ENCODE measurements at regions of chr7 and their contacts with region 1.

Region 1: DNA sequence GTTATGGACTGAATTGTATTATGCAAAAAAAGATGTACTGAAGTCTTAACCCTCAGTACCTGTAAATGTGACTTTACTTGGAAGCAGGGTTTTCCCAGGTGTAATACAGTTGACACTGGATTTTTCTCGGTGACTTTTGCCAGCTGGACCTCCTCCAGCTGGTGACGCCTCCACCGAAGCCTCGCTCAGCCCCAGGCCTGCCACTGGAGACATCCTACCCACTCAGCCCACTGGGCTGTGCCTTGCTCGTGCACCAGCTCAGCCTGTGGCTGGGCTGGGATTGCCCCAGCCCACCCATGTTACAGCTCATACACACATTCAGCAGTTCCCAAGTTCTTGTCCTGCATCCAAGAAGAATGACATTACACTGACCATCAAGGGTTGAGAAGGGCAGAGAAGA is 42.4 kb upstream of the GPR22 start:
- DNase-seq: peak in 3 of 5 donors; percentile 21 to 41 (median 31)
- ATAC-seq: peak in 3 of 4 donors; percentile 65 to 81 (median 65)
- H3K4me3 ChIP-seq: no peak overlapping the region
- H3K27ac ChIP-seq: no peak overlapping the region
- H3K4me1 ChIP-seq: peaks cover 0 to 9% (median 0%) of the 10 kb centered on the region in 12 donors
- H3K27me3 ChIP-seq: no peaks in the 10 kb centered on the region
- CTCF ChIP-seq: no peak
- POLR2A ChIP-seq: no peak

Region 2: DNA sequence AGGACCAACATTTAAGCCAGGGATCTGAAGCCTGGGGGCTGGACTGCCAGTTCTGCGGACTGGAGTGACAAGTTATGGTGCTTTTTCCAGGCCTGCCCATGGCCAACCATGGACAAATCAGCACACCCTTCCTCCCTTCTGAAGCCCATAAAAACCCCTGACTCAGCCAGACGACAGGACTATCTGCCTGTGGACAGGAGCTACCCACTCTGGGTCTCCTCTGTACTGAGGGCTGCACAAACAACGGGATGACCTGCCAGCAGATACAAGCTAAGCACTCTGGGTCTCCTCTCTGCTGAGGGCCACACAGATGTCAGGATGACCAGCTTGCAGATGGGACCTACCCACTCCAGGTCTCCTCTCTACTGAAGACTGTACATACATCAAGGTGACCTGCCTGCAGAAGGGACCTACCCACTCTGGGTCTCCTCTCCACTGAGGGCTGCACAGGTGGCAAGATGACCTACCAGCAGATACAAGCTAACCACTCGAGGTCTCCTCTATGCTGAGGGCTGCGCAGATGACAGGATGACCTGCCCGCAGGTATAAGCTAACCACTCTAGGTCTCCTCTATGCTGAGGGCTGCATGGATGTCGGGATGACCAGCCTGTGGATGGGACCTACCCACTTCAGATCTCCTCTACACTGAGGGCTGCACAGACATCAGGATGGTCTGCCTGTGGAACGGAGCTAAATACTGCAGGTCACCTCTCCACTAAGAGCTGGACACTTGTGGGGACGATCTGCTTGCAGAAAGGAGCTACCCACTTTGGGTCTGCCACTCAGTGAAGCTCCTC is 67.7 kb before region 1 on chr7:
- intact Hi-C with region 1: loop called in 1 of 10 experiments (anchors 10 kb)
- DNase-seq: no peak
- ATAC-seq: peak in 1 of 4 donors; percentile 20
- H3K4me3 ChIP-seq: no peak overlapping the region
- H3K27ac ChIP-seq: no peak overlapping the region
- H3K4me1 ChIP-seq: no peaks in the 10 kb centered on the region
- H3K27me3 ChIP-seq: no peaks in the 10 kb centered on the region
- CTCF ChIP-seq: no peak
- POLR2A ChIP-seq: no peak

Region 3: DNA sequence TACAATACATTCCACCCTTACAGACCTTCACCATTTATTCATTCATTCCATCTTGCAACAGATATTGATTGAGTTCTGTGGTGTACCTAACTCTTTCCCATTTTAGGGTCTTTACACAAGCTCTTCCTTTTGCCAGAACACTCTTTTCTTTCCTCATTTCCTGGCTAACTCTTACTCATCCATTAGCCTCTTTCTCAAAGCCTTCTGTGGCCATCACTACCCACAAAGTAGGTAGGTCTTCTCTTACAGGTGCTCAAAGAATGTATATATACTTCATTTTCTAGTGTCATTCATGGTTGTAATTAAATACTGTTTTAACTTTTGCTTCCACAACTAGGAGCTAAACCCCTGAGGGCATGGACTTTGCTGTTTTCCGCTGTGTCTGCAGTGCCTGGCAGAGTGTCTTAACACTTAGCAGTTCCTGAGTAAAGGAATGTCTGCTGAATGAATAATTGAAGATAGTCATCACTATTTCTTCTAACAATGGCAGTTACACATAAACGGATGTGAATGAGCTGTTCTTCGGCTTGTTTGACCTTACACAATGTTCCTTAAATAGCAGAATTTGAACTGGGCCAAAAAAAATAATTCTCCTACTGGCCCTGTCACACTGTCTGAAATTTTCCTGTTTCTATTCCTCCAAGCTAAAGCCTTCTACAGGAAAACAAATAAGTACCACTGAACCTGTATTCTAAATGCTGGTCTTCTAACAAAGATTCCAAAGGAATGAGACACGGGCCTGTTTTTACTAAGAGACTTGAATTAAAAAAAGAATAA is 167.7 kb after region 1 on chr7:
- intact Hi-C with region 1: no loop called
- DNase-seq: peak in 2 of 5 donors; percentile 10 to 36
- ATAC-seq: peak; percentile 70 to 93 (median 89)
- H3K4me3 ChIP-seq: no peak overlapping the region
- H3K27ac ChIP-seq: peak overlapping the region; percentile 27 to 83 (median 68)
- H3K4me1 ChIP-seq: peaks cover 9 to 61% (median 32%) of the 10 kb centered on the region in 12 donors
- H3K27me3 ChIP-seq: no peaks in the 10 kb centered on the region
- CTCF ChIP-seq: no peak
- POLR2A ChIP-seq: no peak

Measured in heart left ventricle (tissue), 16 donors.